ENCODE measurements at regions of chr1 and their contacts with region 1.

Region 1: DNA sequence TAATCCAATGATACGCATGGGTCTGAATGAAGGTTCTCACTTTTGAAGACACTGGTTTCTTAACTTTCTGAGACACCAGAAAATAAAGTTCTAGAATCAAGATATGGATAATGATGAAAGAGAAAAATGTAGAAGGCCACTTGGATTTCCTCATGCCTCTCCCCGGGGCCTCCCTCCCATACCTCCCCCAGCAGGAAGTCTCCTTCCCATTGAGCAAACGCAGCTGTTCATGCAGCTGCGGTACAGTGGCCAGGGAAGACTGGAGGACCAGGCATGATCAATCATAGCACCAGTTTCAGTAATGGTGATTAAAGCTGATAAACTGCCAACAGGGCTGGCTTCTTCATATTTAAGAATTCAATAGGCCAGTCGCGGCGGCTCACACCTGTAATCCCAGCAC is 10.9 kb upstream of the UBR4 start:
- DNase-seq: no peak
- H3K4me3 ChIP-seq: no peak overlapping the region
- H3K27ac ChIP-seq: no peak overlapping the region
- H3K4me1 ChIP-seq: no peaks in the 10 kb centered on the region
- H3K27me3 ChIP-seq: no peaks in the 10 kb centered on the region
- CTCF ChIP-seq: no peak
- EP300 ChIP-seq: no peak
- POLR2A ChIP-seq: no peak
- RAD21 ChIP-seq: no peak

Region 2: DNA sequence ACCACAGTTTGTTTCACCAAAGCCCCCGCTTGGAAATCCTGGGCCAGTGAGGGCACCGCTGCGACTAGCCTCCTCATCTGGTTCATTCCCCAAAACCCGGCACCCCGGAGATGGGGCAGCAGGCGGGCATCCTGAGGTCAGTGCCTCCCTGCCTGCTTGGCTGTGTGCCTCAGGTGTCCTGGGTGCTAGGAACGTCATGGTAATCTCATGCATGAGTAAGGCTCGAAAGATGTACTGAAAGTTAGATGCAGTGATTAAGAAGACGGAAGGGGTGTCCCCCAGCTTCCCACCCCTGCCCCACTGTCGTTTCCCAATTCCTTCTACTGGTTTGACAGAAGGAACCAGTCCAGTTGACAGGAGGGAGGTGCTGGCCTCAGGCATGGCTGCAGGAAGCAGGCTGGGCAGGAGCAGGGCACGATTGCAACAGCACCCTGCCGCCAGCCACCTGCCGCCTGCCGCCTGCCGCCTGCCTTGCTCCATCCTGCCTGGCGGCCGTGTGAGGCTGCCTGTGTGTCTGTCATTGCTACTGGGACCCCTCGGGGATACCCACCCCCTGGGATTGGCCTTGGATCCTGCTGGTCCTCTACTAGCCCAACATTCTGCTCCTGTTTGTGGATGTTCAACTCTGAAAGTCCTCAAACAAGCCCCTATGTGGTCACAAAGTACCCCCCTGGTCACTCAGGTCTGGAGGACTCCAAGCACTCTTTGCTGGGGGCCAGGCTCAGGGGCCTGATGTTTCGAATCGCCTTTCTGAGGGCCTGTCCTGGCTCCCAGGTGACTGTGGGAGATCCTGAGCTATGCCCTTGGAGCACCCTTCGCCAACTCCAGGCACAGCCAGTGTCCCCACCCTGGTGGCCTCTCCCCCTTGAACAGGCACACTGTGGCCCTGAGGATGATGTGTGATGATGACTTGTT is 191.5 kb before region 1 on chr1:
- CTCF ChIA-PET with region 1: no interaction called
- POLR2A ChIA-PET with region 1: no interaction called
- DNase-seq: no peak
- H3K4me3 ChIP-seq: no peak overlapping the region
- H3K27ac ChIP-seq: no peak overlapping the region
- H3K4me1 ChIP-seq: peaks cover 0 to 4% (median 0%) of the 10 kb centered on the region in 4 experiments; a peak in 4 of 7 replicates
- H3K27me3 ChIP-seq: no peaks in the 10 kb centered on the region; a peak in 1 of 7 replicates
- CTCF ChIP-seq: no peak
- EP300 ChIP-seq: no peak
- POLR2A ChIP-seq: no peak
- RAD21 ChIP-seq: no peak

Region 3: DNA sequence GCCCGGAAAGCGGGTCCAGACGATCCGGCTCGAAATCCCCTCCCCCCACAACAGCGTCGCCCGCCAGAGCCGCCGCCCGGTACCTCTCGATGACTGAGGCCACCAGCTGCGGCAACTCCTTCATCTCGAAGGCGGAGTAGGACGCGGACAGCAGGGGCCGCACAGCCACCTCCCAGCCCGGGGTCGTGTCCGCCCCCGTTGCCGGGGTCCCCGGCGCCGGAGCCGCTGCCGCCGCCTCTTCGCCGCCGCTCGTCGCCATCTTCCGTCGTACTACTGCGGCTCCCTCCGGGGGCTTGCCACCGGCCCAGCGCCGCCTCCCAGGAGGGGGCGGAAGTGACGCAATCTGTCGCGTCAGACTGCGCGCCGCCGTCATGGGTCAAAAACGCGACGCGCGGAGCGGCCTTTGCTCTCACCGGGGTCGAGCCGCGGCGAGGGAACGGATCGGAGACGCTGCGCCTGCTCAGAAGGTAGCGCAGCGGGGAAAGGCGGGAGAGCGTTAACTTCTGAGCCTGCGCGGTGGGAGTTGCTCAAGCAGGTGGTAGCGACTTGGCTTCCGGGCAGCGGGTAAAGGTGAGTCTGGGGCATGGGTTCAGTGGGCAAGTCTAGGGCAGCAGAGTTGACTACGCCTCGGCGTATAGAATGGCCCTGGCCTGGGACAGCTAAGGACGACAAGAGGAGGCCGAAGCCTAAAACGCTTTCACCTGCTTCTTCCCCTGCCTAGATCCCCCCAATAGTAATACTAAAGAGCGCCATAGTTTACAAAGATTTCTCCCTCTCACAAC is 10.8 kb before region 1 on chr1 and contains the start of gene UBR4:
- CTCF ChIA-PET with region 1: interaction called, 8 read pairs
- POLR2A ChIA-PET with region 1: interaction called, 42 read pairs
- DNase-seq: peak; percentile 83 to 99
- H3K4me3 ChIP-seq: peak within 1 kb of the TSS; percentile 76 to 95 (median 91)
- H3K27ac ChIP-seq: peak within 1 kb of the TSS; percentile 94
- H3K4me1 ChIP-seq: peaks cover 0 to 8% (median 0%) of the 10 kb centered on the region in 4 experiments; a peak in 3 of 7 replicates
- H3K27me3 ChIP-seq: no peaks in the 10 kb centered on the region
- CTCF ChIP-seq: no peak
- EP300 ChIP-seq: peak in 1 of 2 experiments; percentile 91; a peak in 1 of 3 replicates
- POLR2A ChIP-seq: peak; percentile 94 to 95
- RAD21 ChIP-seq: no peak
- total RNA-seq, gene UBR4: 148 and 152 TPM in 2 replicates

Region 4: DNA sequence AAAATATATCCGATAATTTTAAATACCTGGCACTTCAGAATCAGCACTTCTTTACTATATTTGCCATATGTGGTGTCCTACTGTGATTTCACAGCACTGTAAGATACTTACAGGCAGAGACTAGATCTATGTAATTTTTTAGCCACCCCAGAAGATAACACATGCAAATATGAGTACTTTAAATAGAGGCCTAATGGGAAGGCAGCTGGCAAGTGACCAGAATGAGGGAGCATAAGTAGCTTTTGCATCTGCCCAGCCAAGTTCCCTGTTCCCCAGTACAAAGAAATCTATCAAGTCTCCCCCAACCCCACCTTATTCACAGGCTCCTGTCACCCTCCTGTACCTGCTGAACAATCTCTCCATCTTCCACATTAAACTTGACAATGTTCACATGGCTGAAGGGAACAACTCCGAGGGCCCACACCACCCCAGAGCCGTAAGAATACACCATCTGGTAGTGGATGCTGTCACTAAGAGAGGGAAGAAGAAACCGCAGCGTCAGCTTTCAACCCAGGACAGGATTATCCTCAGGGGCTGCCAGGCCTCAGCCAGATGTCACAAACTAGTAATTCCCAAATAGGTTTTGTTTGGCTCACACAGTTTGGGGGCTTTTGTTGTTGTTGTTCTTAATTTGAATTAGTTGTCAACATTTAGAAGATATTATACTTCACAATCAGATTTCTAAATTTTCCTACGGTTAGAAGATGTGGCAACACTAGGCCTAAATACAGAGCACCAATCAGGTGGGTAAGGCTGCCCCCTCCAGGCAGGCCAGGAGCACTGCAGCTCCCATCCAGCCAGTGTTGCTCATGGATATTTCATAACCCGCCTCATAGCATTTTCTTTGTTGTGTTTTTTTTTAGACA is 19.9 kb after region 1 on chr1:
- CTCF ChIA-PET with region 1: interaction called, 40 read pairs
- POLR2A ChIA-PET with region 1: interaction called, 4 read pairs
- DNase-seq: peak in 1 of 2 experiments; percentile 67
- H3K4me3 ChIP-seq: no peak overlapping the region
- H3K27ac ChIP-seq: no peak overlapping the region
- H3K4me1 ChIP-seq: no peaks in the 10 kb centered on the region
- H3K27me3 ChIP-seq: no peaks in the 10 kb centered on the region
- CTCF ChIP-seq: peak; percentile 48 to 84 (median 78); a peak in 3 of 4 replicates
- EP300 ChIP-seq: no peak
- POLR2A ChIP-seq: no peak
- RAD21 ChIP-seq: peak; percentile 35 to 52

Measured in H1 (cell line).